B cell (primary cell): ENCODE measurements at regions of chr12 and their contacts with region 1.

Region 1: DNA sequence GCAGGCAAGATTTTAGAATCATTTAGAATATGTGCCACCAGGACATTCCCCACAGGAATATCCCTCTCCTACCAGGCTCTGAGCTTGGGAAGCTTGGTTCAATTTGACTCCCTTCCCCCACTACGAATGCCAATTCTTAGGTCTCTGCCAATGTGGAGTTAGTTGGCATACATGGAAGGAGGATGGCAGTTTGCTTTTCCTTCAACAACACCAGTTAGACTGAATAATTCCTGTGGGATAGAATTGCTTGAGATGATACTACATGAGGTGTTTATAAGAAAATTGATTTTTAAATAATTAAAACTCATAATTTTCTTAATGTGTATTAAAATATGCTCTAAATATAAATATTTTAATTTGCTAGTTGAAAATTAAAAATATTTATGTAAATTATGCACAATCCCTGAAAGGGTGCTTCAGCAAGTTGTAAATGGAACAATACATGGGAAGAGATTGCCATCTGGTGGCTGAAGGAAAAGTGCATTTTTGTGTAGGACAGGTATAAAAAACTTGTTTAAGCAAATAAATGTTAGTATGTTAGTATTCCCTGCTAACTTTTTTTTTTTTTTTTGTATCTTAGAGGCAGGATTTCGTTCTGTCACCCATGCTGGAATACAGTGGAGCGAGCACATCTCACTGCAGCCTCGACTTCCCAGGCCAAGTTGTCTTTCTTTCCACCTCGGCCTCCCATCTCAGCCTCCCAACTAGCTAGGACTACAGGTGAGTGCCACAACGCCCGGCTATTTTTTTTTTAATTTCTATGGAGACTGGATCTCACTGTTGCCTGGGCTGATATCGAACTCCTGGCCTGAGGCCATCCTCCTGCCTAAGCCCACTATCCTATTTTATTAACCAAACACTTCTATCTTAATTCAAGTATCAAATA is 25.8 kb upstream of the STRAP start:
- DNase-seq: peak; percentile 71
- ATAC-seq: no peak
- H3K4me3 ChIP-seq: no peak overlapping the region
- H3K4me3 Mint-ChIP-seq: no peak overlapping the region
- H3K27ac ChIP-seq: no peak overlapping the region
- H3K27ac Mint-ChIP-seq: no peak overlapping the region
- H3K4me1 ChIP-seq: no peaks in the 10 kb centered on the region
- H3K4me1 Mint-ChIP-seq: no peaks in the 10 kb centered on the region
- H3K27me3 ChIP-seq: no peaks in the 10 kb centered on the region
- H3K27me3 Mint-ChIP-seq: no peaks in the 10 kb centered on the region
- CTCF ChIP-seq: peak; percentile 91

Region 2: GRCh38 chr12:15001733-15002382 is 854.5 kb before region 1 on chr12:
- CTCF ChIA-PET with region 1: no interaction called
- POLR2A ChIA-PET with region 1: no interaction called
- intact Hi-C with region 1: loop called (anchors 5 kb)
- DNase-seq: no peak
- ATAC-seq: no peak
- H3K4me3 ChIP-seq: no peak overlapping the region
- H3K4me3 Mint-ChIP-seq: no peak overlapping the region
- H3K27ac ChIP-seq: no peak overlapping the region
- H3K27ac Mint-ChIP-seq: no peak overlapping the region
- H3K4me1 ChIP-seq: no peaks in the 10 kb centered on the region
- H3K4me1 Mint-ChIP-seq: no peaks in the 10 kb centered on the region
- H3K27me3 ChIP-seq: peaks cover 0 to 22% (median 9%) of the 10 kb centered on the region in 4 experiments
- H3K27me3 Mint-ChIP-seq: peaks cover 28% of the 10 kb centered on the region
- CTCF ChIP-seq: no peak

Region 3: DNA sequence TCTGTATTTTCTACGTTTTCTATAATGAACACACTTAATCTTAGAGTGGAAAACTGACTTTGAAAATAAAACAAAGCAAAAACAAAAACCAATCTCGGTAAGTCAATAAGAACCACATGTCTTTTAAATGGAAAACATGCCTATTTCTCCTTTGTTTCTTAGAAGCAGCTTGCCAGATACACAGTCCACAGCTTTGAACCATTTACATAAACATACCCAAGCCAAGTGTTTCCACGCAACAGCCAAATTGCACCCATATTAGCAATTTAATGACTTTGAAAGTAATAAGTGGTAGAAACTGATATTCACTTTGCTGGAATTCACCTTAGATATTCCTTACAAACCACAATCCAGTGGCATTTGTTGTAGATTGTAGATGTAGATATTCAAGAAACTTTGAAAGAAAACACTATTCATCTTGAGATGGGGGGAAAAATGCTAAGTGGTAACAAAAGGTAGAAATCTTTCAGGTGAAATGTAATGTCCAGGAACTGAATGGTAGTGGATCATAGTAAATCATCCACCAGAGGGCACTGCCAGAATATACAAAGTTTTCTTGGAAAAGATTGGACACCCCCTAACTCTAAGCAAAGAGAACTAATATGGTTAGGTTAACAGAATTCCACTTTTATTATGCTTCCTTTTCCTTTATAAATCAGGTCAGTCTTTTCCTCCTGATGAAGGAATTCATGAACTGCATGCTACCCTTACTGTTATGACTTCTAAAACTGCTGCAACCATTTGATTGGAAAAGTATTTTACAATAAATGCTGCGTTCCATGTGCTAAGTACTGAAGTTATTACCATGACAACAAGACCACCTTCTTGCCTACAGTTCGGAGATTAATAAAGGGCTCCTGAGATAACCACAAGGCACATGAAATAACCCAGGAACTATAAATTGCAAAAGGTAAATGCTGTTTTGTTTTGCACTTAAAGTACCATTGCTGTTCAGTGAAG is 704.9 kb before region 1 on chr12:
- CTCF ChIA-PET with region 1: interaction called, 3 read pairs
- POLR2A ChIA-PET with region 1: no interaction called
- intact Hi-C with region 1: loop called (anchors 5 kb)
- DNase-seq: peak; percentile 3
- ATAC-seq: no peak
- H3K4me3 ChIP-seq: no peak overlapping the region
- H3K4me3 Mint-ChIP-seq: no peak overlapping the region
- H3K27ac ChIP-seq: no peak overlapping the region
- H3K27ac Mint-ChIP-seq: no peak overlapping the region
- H3K4me1 ChIP-seq: no peaks in the 10 kb centered on the region
- H3K4me1 Mint-ChIP-seq: no peaks in the 10 kb centered on the region
- H3K27me3 ChIP-seq: peaks cover 0 to 10% (median 0%) of the 10 kb centered on the region in 4 experiments
- H3K27me3 Mint-ChIP-seq: peaks cover 18% of the 10 kb centered on the region
- CTCF ChIP-seq: peak; percentile 25

Region 4: DNA sequence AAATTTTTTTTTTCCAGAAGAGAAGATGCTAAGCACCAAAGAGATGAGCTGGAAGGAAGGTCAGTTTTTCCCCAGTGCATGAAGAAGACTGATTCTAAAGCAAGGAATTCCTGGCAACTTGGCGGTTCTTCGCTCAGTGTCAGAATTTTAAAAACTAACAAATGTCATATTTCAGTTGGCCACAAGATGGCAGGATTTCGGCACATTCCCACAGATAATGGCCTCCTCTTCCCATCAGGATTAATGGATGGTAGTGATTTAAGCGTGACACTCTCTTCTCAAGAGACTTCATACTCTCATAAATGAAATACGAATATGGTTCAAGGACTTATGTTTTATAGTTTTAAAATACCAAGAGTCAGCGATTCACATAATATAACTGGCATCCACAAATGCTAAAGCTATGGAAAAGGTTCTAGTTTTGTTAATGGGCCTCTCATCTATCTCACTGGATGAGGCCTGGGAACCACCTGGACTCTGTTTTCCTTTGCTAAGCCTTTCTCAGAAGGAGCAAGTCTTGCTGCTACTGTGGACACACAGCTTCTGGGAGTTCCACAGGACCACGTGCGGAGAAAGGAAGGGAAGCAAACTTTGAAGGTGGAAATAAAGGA is 580.1 kb before region 1 on chr12:
- CTCF ChIA-PET with region 1: interaction called, 4 read pairs
- POLR2A ChIA-PET with region 1: no interaction called
- intact Hi-C with region 1: loop called (anchors 1 kb)
- DNase-seq: peak; percentile 20
- ATAC-seq: no peak
- H3K4me3 ChIP-seq: no peak overlapping the region
- H3K4me3 Mint-ChIP-seq: no peak overlapping the region
- H3K27ac ChIP-seq: no peak overlapping the region
- H3K27ac Mint-ChIP-seq: no peak overlapping the region
- H3K4me1 ChIP-seq: no peaks in the 10 kb centered on the region
- H3K4me1 Mint-ChIP-seq: peaks cover 4% of the 10 kb centered on the region
- H3K27me3 ChIP-seq: peaks cover 0 to 4% (median 0%) of the 10 kb centered on the region in 4 experiments
- H3K27me3 Mint-ChIP-seq: peaks cover 15% of the 10 kb centered on the region
- CTCF ChIP-seq: peak; percentile 75

Region 5: DNA sequence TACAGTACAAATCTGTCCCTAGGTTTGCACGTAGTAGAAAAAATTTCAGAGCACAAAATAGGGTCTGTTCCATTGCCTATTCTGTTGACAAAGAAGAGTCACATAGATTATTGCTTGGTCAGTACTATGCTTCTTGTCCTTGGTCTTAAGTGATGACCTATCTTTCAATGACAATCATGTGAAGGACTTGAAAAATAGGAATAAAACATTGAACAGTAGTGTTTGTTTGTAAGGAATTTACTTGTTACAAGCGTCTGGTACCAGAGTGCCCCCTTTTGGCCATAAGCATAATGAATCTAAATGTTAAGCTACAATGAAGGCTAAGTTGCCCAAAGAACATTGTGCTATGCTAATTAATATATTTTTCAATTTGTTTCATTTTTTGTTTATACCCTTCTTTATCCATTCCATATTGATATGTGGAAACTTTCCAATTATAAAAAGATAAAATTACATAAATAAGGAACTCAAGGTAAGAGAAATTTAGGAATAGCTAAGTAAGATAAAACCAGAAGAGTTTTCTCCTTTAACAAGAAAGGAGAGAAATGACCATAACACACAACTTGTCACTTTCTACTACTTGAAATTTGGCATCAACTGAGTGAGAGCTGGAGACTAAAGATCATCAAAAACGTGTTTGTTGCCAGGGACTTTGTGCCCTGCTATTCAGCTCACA is 271.8 kb before region 1 on chr12:
- CTCF ChIA-PET with region 1: interaction called, 85 read pairs
- POLR2A ChIA-PET with region 1: no interaction called
- intact Hi-C with region 1: no loop called
- DNase-seq: peak; percentile 76
- ATAC-seq: peak; percentile 63
- H3K4me3 ChIP-seq: no peak overlapping the region
- H3K4me3 Mint-ChIP-seq: no peak overlapping the region
- H3K27ac ChIP-seq: no peak overlapping the region
- H3K27ac Mint-ChIP-seq: peak overlapping the region; percentile 65
- H3K4me1 ChIP-seq: no peaks in the 10 kb centered on the region
- H3K4me1 Mint-ChIP-seq: no peaks in the 10 kb centered on the region
- H3K27me3 ChIP-seq: no peaks in the 10 kb centered on the region
- H3K27me3 Mint-ChIP-seq: no peaks in the 10 kb centered on the region
- CTCF ChIP-seq: peak; percentile 86

Region 6: GRCh38 chr12:15590180-15590826 is 266.0 kb before region 1 on chr12:
- CTCF ChIA-PET with region 1: interaction called, 85 read pairs
- POLR2A ChIA-PET with region 1: no interaction called
- intact Hi-C with region 1: loop called (anchors 1 kb)
- DNase-seq: peak; percentile 79
- ATAC-seq: peak; percentile 91
- H3K4me3 ChIP-seq: peak overlapping the region in 1 of 5 experiments; percentile 20
- H3K4me3 Mint-ChIP-seq: peak overlapping the region; percentile 81
- H3K27ac ChIP-seq: no peak overlapping the region
- H3K27ac Mint-ChIP-seq: peak overlapping the region; percentile 64
- H3K4me1 ChIP-seq: peaks cover 6 to 8% of the 10 kb centered on the region in 2 donors
- H3K4me1 Mint-ChIP-seq: peaks cover 9% of the 10 kb centered on the region
- H3K27me3 ChIP-seq: no peaks in the 10 kb centered on the region
- H3K27me3 Mint-ChIP-seq: no peaks in the 10 kb centered on the region
- CTCF ChIP-seq: peak; percentile 91

Region 7: GRCh38 chr12:15772405-15773018 is 83.8 kb before region 1 on chr12:
- CTCF ChIA-PET with region 1: interaction called, 32 read pairs
- POLR2A ChIA-PET with region 1: no interaction called
- intact Hi-C with region 1: loop called (anchors 1 kb)
- DNase-seq: peak; percentile 22
- ATAC-seq: no peak
- H3K4me3 ChIP-seq: no peak overlapping the region
- H3K4me3 Mint-ChIP-seq: no peak overlapping the region
- H3K27ac ChIP-seq: no peak overlapping the region
- H3K27ac Mint-ChIP-seq: no peak overlapping the region
- H3K4me1 ChIP-seq: no peaks in the 10 kb centered on the region
- H3K4me1 Mint-ChIP-seq: no peaks in the 10 kb centered on the region
- H3K27me3 ChIP-seq: no peaks in the 10 kb centered on the region
- H3K27me3 Mint-ChIP-seq: peaks cover 11% of the 10 kb centered on the region
- CTCF ChIP-seq: peak; percentile 51